ENCODE measurements at regions of chr22 and their contacts with region 1.

Region 1: GRCh38 chr22:23750714-23751440 is at the start of gene ZNF70:
- DNase-seq: peak; percentile 67 to 85
- ATAC-seq: peak; percentile 73 to 80
- H3K4me3 ChIP-seq: peak within 1 kb of the TSS; percentile 62 to 89 (median 76)
- H3K27ac ChIP-seq: peak within 1 kb of the TSS; percentile 78 to 89 (median 84)
- H3K4me1 ChIP-seq: peaks cover 9 to 10% of the 10 kb centered on the region in 2 donors
- H3K27me3 ChIP-seq: no peaks in the 10 kb centered on the region
- CTCF ChIP-seq: peak in 3 of 5 experiments; percentile 12 to 30 (median 22)
- POLR2A ChIP-seq: peak; percentile 73 to 74
- total RNA-seq, gene ZNF70: 3.1 to 6.3 (median 4.2) TPM

Region 2: GRCh38 chr22:23414727-23415431 is 336.0 kb before region 1 on chr22:
- in situ Hi-C with region 1: no loop called
- intact Hi-C with region 1: no loop called
- DNase-seq: no peak
- ATAC-seq: no peak
- H3K4me3 ChIP-seq: no peak overlapping the region
- H3K27ac ChIP-seq: no peak overlapping the region
- H3K4me1 ChIP-seq: no peaks in the 10 kb centered on the region
- H3K27me3 ChIP-seq: peaks cover 0 to 3% (median 0%) of the 10 kb centered on the region in 3 donors
- CTCF ChIP-seq: no peak
- POLR2A ChIP-seq: no peak

Region 3: DNA sequence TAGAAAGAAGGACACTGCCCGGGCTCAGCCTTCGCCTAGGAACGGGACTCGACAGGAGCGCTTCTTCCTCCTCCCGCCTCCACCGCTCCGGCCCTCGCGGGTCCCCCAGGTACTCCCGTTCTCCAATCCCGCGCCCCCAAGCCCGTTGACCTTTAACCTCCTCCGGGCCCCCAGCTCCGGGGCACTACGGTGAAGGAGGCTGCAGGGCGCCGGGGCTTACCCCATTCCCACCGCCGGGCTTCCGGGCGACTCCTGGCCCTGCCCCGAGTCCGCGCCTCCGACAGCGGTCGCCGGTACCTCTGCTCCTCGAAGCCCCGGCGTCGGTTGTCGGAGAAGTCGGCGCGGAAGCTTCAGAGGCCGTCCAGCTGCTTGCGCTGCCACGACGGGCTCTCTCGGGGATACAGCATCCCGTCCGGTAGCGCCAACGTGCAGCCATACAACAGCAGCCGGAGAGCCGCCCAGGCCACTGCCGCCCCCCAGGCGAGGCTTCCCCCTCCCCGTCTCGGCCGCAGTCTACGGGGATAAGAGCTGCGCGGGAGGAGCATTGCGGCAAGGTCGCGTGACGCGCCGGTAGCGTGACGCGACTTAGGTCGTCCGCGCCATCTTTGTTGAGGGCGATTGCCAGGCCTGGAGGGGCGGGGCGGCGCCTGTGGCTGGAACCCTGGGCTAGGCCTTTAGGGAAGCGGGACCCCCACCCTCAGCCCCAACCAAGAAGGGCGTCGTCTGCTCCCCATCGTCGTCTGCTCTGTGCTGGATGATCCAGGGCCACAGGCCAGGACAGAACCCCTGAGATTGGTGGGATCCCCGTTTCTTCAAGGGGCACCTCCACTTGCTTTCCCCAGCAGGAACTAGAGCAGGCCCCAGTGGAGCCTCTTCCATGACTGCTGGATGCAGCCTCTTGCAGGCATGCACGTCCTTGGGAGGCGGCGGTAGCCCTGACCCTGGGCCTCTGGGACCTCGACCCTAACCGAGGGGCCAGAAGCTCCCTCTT is 33.8 kb before region 1 on chr22:
- in situ Hi-C with region 1: no loop called
- intact Hi-C with region 1: loop called (anchors 5 kb)
- DNase-seq: peak; percentile 66 to 81
- ATAC-seq: peak; percentile 91
- H3K4me3 ChIP-seq: peak overlapping the region; percentile 96 to 99 (median 98)
- H3K27ac ChIP-seq: peak overlapping the region; percentile 85 to 93 (median 90)
- H3K4me1 ChIP-seq: peaks cover 11 to 15% of the 10 kb centered on the region in 2 donors
- H3K27me3 ChIP-seq: no peaks in the 10 kb centered on the region
- CTCF ChIP-seq: no peak
- POLR2A ChIP-seq: peak; percentile 88 to 94

Region 4: GRCh38 chr22:23737696-23738095 is 13.2 kb before region 1 on chr22:
- in situ Hi-C with region 1: no loop called
- intact Hi-C with region 1: no loop called
- DNase-seq: no peak
- ATAC-seq: no peak
- H3K4me3 ChIP-seq: no peak overlapping the region
- H3K27ac ChIP-seq: no peak overlapping the region
- H3K4me1 ChIP-seq: peaks cover 9 to 12% of the 10 kb centered on the region in 2 donors
- H3K27me3 ChIP-seq: no peaks in the 10 kb centered on the region
- CTCF ChIP-seq: no peak
- POLR2A ChIP-seq: no peak

Measured in gastrocnemius medialis (tissue), 4 donors.